SK-N-SH (cell line): ENCODE measurements at regions of chr7 and their contacts with region 1.

Region 1: DNA sequence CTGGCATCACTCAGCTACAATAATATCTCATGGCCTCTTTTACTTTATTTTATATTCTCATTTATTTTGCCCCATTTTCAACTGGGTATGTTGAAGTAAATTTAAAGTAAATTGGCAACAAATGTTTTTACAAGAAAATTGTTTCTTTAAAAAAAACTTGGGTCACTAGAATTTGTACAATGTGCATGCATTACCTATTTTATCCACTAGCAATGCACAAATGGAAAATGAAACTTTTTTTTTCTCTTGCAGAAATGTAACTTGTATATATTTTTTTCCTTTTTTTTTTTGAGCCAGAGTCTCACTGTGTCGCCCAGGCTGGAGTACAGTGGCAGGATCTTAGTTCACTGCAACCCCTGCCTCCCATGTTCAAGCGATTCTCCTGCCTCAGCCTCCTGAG is 10.3 kb upstream of the H2AZ2 start:
- DNase-seq: no peak
- H3K4me3 ChIP-seq: no peak overlapping the region
- H3K27ac ChIP-seq: no peak overlapping the region
- H3K4me1 ChIP-seq: no peaks in the 10 kb centered on the region
- H3K27me3 ChIP-seq: no peaks in the 10 kb centered on the region
- CTCF ChIP-seq: peak; percentile 53
- EP300 ChIP-seq: no peak
- RAD21 ChIP-seq: no peak

Region 2: GRCh38 chr7:44876393-44876792 is 18.2 kb after region 1 on chr7:
- CTCF ChIA-PET with region 1: interaction called, 38 read pairs
- POLR2A ChIA-PET with region 1: no interaction called
- DNase-seq: no peak
- H3K4me3 ChIP-seq: no peak overlapping the region
- H3K27ac ChIP-seq: no peak overlapping the region
- H3K4me1 ChIP-seq: peaks cover 0 to 15% of the 10 kb centered on the region in 2 experiments; a peak in 2 of 4 replicates
- H3K27me3 ChIP-seq: no peaks in the 10 kb centered on the region
- CTCF ChIP-seq: no peak
- EP300 ChIP-seq: no peak
- RAD21 ChIP-seq: no peak

Region 3: DNA sequence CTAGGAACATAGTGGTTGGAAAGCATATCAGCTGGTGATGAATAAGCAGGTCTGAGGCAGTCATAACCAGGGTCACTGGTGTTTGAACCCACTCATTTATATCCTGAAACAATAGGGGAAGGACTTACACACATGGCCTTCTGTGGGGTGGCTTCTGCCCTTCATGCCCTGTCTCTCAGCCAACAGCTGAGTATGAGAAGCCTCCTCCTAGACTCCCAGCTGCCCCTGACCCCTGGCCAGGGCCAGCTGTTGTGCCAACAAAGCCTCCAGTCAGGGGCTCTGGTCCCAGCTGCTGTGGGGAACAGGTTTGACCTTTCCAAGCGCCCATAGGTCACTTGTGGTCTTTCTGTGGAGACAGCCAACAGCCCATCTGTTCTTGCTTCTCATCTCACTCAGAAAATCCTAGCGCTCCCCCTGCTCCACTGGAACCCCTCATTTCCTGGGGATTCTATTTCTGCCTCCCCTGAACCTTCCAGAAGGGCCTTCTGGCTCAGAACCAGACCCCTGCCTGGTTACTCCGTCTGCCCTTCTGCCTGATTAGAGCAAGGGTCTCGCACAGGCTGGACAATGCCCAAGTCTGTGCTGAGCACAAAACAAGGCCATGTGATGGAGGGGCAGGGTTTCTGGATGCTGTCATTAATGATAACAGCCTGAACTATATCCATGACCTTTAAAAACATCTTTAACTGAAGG is 36.9 kb after region 1 on chr7:
- CTCF ChIA-PET with region 1: interaction called, 10 read pairs
- POLR2A ChIA-PET with region 1: no interaction called
- DNase-seq: no peak
- H3K4me3 ChIP-seq: no peak overlapping the region
- H3K27ac ChIP-seq: no peak overlapping the region
- H3K4me1 ChIP-seq: no peaks in the 10 kb centered on the region; a peak in 1 of 4 replicates
- H3K27me3 ChIP-seq: no peaks in the 10 kb centered on the region
- CTCF ChIP-seq: no peak
- EP300 ChIP-seq: no peak
- RAD21 ChIP-seq: no peak

Region 4: GRCh38 chr7:44921607-44922359 is 63.6 kb after region 1 on chr7:
- CTCF ChIA-PET with region 1: interaction called, 135 read pairs
- POLR2A ChIA-PET with region 1: no interaction called
- DNase-seq: peak; percentile 90
- H3K4me3 ChIP-seq: no peak overlapping the region; a peak in 1 of 4 replicates
- H3K27ac ChIP-seq: no peak overlapping the region
- H3K4me1 ChIP-seq: no peaks in the 10 kb centered on the region
- H3K27me3 ChIP-seq: 0 out of 2 replicates have a peak, but pooled peaks cover 3% of the 10 kb centered on the region
- CTCF ChIP-seq: peak; percentile 95
- EP300 ChIP-seq: no peak
- RAD21 ChIP-seq: peak; percentile 87

Region 5: GRCh38 chr7:45111298-45112223 is 253.4 kb after region 1 on chr7 and contains the start of gene TBRG4:
- CTCF ChIA-PET with region 1: interaction called, 13 read pairs
- POLR2A ChIA-PET with region 1: no interaction called
- DNase-seq: peak; percentile 96
- H3K4me3 ChIP-seq: peak within 1 kb of the TSS; percentile 69 to 97
- H3K27ac ChIP-seq: peak within 1 kb of the TSS; percentile 96 to 98
- H3K4me1 ChIP-seq: peaks cover 12 to 25% of the 10 kb centered on the region in 2 experiments; a peak in 2 of 4 replicates
- H3K27me3 ChIP-seq: peaks cover 11% of the 10 kb centered on the region; the same call in 1 of the 2 replicates
- CTCF ChIP-seq: peak; percentile 63
- EP300 ChIP-seq: no peak; a peak in 1 of 4 replicates
- RAD21 ChIP-seq: peak; percentile 63
- polyA plus RNA-seq, gene TBRG4: 76.2 and 89.4 TPM in 2 replicates